ENCODE measurements at regions of chr1 and their contacts with region 1.

Region 1: GRCh38 chr1:64933296-64934070 is 32.9 kb downstream of the JAK1 start:
- DNase-seq: peak; percentile 22 to 91
- H3K4me3 ChIP-seq: peak overlapping the region; percentile 22 to 46
- H3K27ac ChIP-seq: peak overlapping the region; percentile 78 to 79
- H3K4me1 ChIP-seq: peaks cover 0 to 29% of the 10 kb centered on the region in 2 donors
- H3K27me3 ChIP-seq: no peaks in the 10 kb centered on the region
- CTCF ChIP-seq: no peak

Region 2: GRCh38 chr1:64898107-64898845 is 35.2 kb before region 1 on chr1:
- intact Hi-C with region 1: loop called (anchors 1 kb)
- DNase-seq: peak; percentile 92 to 96
- H3K4me3 ChIP-seq: peak overlapping the region; percentile 24 to 31
- H3K27ac ChIP-seq: peak overlapping the region; percentile 79 to 86
- H3K4me1 ChIP-seq: peaks cover 4 to 23% of the 10 kb centered on the region in 2 donors
- H3K27me3 ChIP-seq: no peaks in the 10 kb centered on the region
- CTCF ChIP-seq: no peak

Region 3: GRCh38 chr1:64966158-64966971 is 32.9 kb after region 1 on chr1 and contains the start of gene JAK1:
- intact Hi-C with region 1: loop called (anchors 1 kb)
- DNase-seq: peak in 1 of 2 donors; percentile 87
- H3K4me3 ChIP-seq: peak within 1 kb of the TSS; percentile 76 to 98
- H3K27ac ChIP-seq: peak within 1 kb of the TSS; percentile 94 to 97
- H3K4me1 ChIP-seq: peaks cover 0 to 6% of the 10 kb centered on the region in 2 donors
- H3K27me3 ChIP-seq: no peaks in the 10 kb centered on the region
- CTCF ChIP-seq: no peak
- total RNA-seq, gene JAK1: 53.5 TPM

Region 4: GRCh38 chr1:65289449-65289848 is 356.0 kb after region 1 on chr1:
- intact Hi-C with region 1: no loop called
- DNase-seq: no peak
- H3K4me3 ChIP-seq: no peak overlapping the region
- H3K27ac ChIP-seq: no peak overlapping the region
- H3K4me1 ChIP-seq: no peaks in the 10 kb centered on the region
- H3K27me3 ChIP-seq: no peaks in the 10 kb centered on the region
- CTCF ChIP-seq: no peak

Measured in ascending aorta (tissue), 2 donors.